ENCODE measurements at regions of chr16 and their contacts with region 1.

Region 1: GRCh38 chr16:67028555-67029248 is at the start of gene CBFB:
- DNase-seq: peak; percentile 96
- H3K4me3 ChIP-seq: peak within 1 kb of the TSS; percentile 96
- H3K27ac ChIP-seq: peak within 1 kb of the TSS; percentile 97
- H3K4me1 ChIP-seq: peaks cover 36% of the 10 kb centered on the region
- H3K27me3 ChIP-seq: no peaks in the 10 kb centered on the region
- CTCF ChIP-seq: no peak; the same call in 1 of the 2 replicates
- total RNA-seq, gene CBFB: 173 and 185 TPM in 2 replicates

Region 2: DNA sequence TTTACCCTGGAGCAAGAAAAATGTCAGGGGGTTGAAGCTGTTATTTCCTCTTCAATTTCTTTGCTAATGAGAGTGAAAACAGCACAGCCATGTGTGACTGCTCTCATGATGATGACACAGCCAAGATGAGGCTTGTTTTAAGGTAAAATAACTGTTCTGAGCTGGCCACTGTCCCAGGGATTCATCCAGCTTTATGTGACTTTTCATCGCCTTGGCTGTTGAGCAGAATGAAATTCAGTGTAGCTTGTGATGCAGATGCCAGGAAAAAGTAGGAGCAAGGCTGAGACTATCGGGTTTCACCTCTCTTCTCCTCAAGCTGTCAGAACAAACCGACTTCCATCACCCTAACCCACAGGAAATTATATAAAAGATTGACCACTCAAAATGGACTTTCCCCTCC is 1024.0 kb before region 1 on chr16:
- CTCF ChIA-PET with region 1: no interaction called
- POLR2A ChIA-PET with region 1: no interaction called
- intact Hi-C with region 1: no loop called
- DNase-seq: no peak
- H3K4me3 ChIP-seq: no peak overlapping the region
- H3K27ac ChIP-seq: no peak overlapping the region
- H3K4me1 ChIP-seq: no peaks in the 10 kb centered on the region
- H3K27me3 ChIP-seq: no peaks in the 10 kb centered on the region
- CTCF ChIP-seq: no peak

Region 3: GRCh38 chr16:67017810-67018488 is 10.8 kb before region 1 on chr16:
- CTCF ChIA-PET with region 1: interaction called, 11 read pairs
- POLR2A ChIA-PET with region 1: interaction called, 4 read pairs
- intact Hi-C with region 1: no loop called
- DNase-seq: peak; percentile 96
- H3K4me3 ChIP-seq: no peak overlapping the region
- H3K27ac ChIP-seq: no peak overlapping the region
- H3K4me1 ChIP-seq: peaks cover 18% of the 10 kb centered on the region
- H3K27me3 ChIP-seq: no peaks in the 10 kb centered on the region
- CTCF ChIP-seq: peak; percentile 96

Region 4: DNA sequence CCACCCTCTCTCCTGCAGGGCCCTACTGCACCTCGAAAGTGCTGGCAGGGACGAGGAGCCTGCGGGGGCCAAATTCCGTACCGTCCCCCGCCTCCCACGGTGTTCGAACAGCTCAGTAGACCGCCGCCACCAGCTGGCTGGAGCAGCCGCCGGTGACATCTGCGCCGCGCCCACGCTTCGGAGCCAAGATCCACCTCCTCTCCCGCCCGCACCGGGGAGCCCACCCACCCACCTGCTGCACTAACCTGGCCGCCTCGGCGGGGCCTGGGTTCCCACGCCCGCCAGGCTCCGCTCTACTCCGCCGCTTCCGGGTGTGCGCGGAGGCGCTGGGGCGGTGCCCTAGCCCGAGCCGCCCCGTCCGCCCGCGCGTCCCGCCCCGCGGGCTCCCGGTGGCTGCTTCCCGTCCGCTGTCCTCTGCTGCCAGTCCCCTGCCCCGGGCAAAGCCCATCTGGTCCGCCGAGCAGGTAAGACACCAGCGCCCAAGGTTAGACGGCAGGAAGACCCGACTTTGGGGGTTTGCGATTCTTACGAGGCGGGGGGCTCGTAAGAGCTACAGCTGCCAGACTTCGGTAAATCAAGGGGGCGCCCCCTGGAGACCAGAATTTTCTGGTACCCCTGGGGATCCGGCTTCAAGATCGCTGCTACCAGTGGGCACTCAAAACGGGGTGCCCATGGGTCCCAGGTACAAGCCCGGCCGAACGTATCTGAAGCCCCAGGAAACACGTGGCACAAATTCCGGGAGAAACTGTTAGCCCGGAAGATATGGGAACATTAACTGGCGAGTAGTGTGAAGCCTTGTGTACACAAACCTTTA is 131.1 kb after region 1 on chr16 and contains the starts of genes FBXL8 and TRADD:
- CTCF ChIA-PET with region 1: no interaction called
- POLR2A ChIA-PET with region 1: no interaction called
- intact Hi-C with region 1: no loop called
- DNase-seq: peak; percentile 75
- H3K4me3 ChIP-seq: peak within 1 kb of the TSS; percentile 88
- H3K27ac ChIP-seq: peak within 1 kb of the TSS; percentile 60
- H3K4me1 ChIP-seq: peaks cover 7% of the 10 kb centered on the region
- H3K27me3 ChIP-seq: no peaks in the 10 kb centered on the region
- CTCF ChIP-seq: peak; percentile 73
- total RNA-seq, gene FBXL8: 8.3 and 13.8 TPM in 2 replicates
- total RNA-seq, gene TRADD: 7.7 and 10.8 TPM in 2 replicates

Measured in A673 (cell line).